ENCODE measurements at regions of chr11 and their contacts with region 1.

Region 1: GRCh38 chr11:95705485-95706124 is 84.0 kb downstream of the FAM76B start:
- DNase-seq: peak; percentile 93
- ATAC-seq: peak; percentile 97

Region 2: GRCh38 chr11:95337175-95337957 is 368.2 kb before region 1 on chr11:
- intact Hi-C with region 1: loop called (anchors 10 kb)
- DNase-seq: peak; percentile 82
- ATAC-seq: peak; percentile 79

Region 3: DNA sequence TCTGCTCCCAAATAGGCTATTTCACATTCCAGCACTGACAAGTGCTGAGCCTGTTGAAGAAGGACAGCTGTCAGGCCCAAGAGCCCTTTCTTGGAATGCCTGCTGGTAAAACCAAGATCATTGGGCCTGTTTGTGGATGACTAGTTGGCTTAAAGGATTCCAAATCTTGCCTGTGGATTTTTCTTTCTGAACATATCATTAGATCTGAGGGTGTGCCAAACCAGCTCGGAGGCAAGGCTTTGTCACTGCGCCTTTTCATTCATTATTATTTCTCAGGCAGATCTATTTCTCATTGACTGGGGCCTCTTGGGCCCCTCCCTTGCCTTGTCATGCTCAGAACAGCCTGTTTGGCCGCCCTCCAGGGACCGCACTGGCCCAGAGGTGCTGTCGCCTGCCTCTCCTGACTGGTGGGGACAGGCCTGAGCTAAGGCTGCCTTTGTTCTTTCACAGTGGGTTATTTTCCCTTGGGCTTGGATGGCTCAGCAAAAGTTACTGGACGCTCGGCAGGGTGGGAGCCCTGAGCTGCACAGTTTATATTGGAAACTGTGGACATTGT is 251.9 kb before region 1 on chr11:
- intact Hi-C with region 1: loop called (anchors 10 kb)
- DNase-seq: peak; percentile 75
- ATAC-seq: peak; percentile 53